ENCODE measurements at regions of chr3 and their contacts with region 1.

Region 1: GRCh38 chr3:9731206-9732079 is at the start of gene BRPF1:
- DNase-seq: peak; percentile 99
- H3K4me3 Mint-ChIP-seq: peak within 1 kb of the TSS; percentile 91
- H3K27ac Mint-ChIP-seq: peak within 1 kb of the TSS; percentile 96
- H3K4me1 Mint-ChIP-seq: peaks cover 66% of the 10 kb centered on the region
- H3K27me3 Mint-ChIP-seq: no peaks in the 10 kb centered on the region
- total RNA-seq, gene BRPF1: 51.3 to 51.6 TPM

Region 2: DNA sequence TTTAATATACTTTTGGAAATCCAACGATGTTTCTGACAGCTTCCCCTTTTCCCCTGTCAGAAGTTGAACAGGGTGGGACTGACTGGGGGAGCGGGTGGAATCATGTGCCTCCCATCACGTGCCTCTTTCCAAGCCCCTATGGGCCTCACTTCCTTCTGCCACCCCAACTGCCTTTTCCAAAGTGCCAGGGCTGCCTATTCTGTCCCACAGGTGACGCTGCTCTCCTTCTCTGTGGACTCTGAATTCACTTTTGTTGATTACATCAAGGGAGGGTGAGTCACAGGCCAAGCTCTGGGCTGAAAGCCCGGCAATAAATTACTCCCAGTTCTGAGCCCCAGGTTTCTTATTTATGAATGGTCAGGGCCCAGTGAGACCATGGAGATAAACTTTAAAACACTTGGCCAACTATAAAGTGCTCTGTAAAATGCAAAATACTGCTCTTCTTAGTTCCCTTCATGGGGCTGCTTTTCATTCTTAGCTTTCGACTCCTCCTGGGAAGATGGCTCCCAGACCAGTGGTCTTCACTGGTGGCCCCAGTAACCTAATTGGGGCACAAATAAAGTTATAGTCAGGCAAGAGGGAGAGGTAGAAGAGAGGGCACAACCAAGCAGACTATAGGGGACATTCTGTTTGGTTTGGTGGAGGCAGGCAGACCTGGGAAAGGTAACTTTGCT is 15.5 kb before region 1 on chr3:
- CTCF ChIA-PET with region 1: interaction called, 19 read pairs
- POLR2A ChIA-PET with region 1: no interaction called
- DNase-seq: no peak
- H3K4me3 Mint-ChIP-seq: no peak overlapping the region
- H3K27ac Mint-ChIP-seq: no peak overlapping the region
- H3K4me1 Mint-ChIP-seq: peaks cover 4% of the 10 kb centered on the region
- H3K27me3 Mint-ChIP-seq: peaks cover 13% of the 10 kb centered on the region

Region 3: GRCh38 chr3:9749645-9750555 is 18.5 kb after region 1 on chr3 and contains the start of gene OGG1:
- CTCF ChIA-PET with region 1: interaction called, 93 read pairs
- POLR2A ChIA-PET with region 1: no interaction called
- DNase-seq: peak; percentile 98
- H3K4me3 Mint-ChIP-seq: peak within 1 kb of the TSS; percentile 94
- H3K27ac Mint-ChIP-seq: peak within 1 kb of the TSS; percentile 96
- H3K4me1 Mint-ChIP-seq: peaks cover 44% of the 10 kb centered on the region
- H3K27me3 Mint-ChIP-seq: no peaks in the 10 kb centered on the region
- total RNA-seq, gene OGG1: 42.3 to 47.9 TPM

Region 4: GRCh38 chr3:9761919-9762318 is 30.5 kb after region 1 on chr3:
- CTCF ChIA-PET with region 1: no interaction called
- POLR2A ChIA-PET with region 1: no interaction called
- DNase-seq: no peak
- H3K4me3 Mint-ChIP-seq: no peak overlapping the region
- H3K27ac Mint-ChIP-seq: no peak overlapping the region
- H3K4me1 Mint-ChIP-seq: peaks cover 2% of the 10 kb centered on the region
- H3K27me3 Mint-ChIP-seq: no peaks in the 10 kb centered on the region